H1 (cell line): ENCODE measurements at regions of chr17 and their contacts with region 1.

Region 1: GRCh38 chr17:50848039-50848438 is 12.7 kb downstream of the WFIKKN2 start:
- DNase-seq: no peak
- H3K4me3 ChIP-seq: no peak overlapping the region
- H3K27ac ChIP-seq: no peak overlapping the region
- H3K4me1 ChIP-seq: peaks cover 2 to 4% (median 3%) of the 10 kb centered on the region in 4 experiments; a peak in 3 of 7 replicates
- H3K27me3 ChIP-seq: no peaks in the 10 kb centered on the region
- CTCF ChIP-seq: no peak
- EP300 ChIP-seq: no peak
- POLR2A ChIP-seq: no peak
- RAD21 ChIP-seq: 0 out of 4 replicates have a peak, but pooled peaks of 1 of the 2 experiments have one; percentile 5

Region 2: GRCh38 chr17:50861071-50861676 is 13.1 kb after region 1 on chr17:
- CTCF ChIA-PET with region 1: interaction called, 70 read pairs
- POLR2A ChIA-PET with region 1: interaction called, 52 read pairs
- DNase-seq: no peak
- H3K4me3 ChIP-seq: no peak overlapping the region
- H3K27ac ChIP-seq: no peak overlapping the region
- H3K4me1 ChIP-seq: no peaks in the 10 kb centered on the region; a peak in 2 of 7 replicates
- H3K27me3 ChIP-seq: no peaks in the 10 kb centered on the region
- CTCF ChIP-seq: no peak
- EP300 ChIP-seq: no peak
- POLR2A ChIP-seq: 0 out of 3 replicates have a peak, but pooled peaks of 1 of the 2 experiments have one; percentile 11
- RAD21 ChIP-seq: no peak